Heart left ventricle (tissue), 16 donors: ENCODE measurements at regions of chr11 and their contacts with region 1.

Region 1: GRCh38 chr11:66438504-66439466 is at the start of gene MRPL11:
- DNase-seq: peak; percentile 86 to 93 (median 89)
- ATAC-seq: peak; percentile 99 to 100 (median 100)
- H3K4me3 ChIP-seq: peak within 1 kb of the TSS; percentile 63 to 98 (median 83)
- H3K27ac ChIP-seq: peak within 1 kb of the TSS; percentile 82 to 95 (median 90)
- H3K4me1 ChIP-seq: peaks cover 0 to 11% (median 8%) of the 10 kb centered on the region in 12 donors
- H3K27me3 ChIP-seq: no peaks in the 10 kb centered on the region
- CTCF ChIP-seq: peak; percentile 31 to 88 (median 68)
- POLR2A ChIP-seq: peak in 1 of 2 donors; percentile 14
- total RNA-seq, gene MRPL11: 38.9 to 56.9 (median 47.4) TPM

Region 2: GRCh38 chr11:66466225-66467027 is 27.6 kb after region 1 on chr11 and contains the start of gene PELI3:
- intact Hi-C with region 1: loop called in 1 of 10 experiments (anchors 2 kb)
- DNase-seq: peak; percentile 91 to 97 (median 94)
- ATAC-seq: peak; percentile 98 to 99 (median 98)
- H3K4me3 ChIP-seq: peak within 1 kb of the TSS; percentile 51 to 88 (median 72)
- H3K27ac ChIP-seq: peak within 1 kb of the TSS in 11 of 12 donors; percentile 52 to 87 (median 73)
- H3K4me1 ChIP-seq: peaks cover 0 to 35% (median 12%) of the 10 kb centered on the region in 12 donors
- H3K27me3 ChIP-seq: no peaks in the 10 kb centered on the region
- CTCF ChIP-seq: no peak
- POLR2A ChIP-seq: peak in 1 of 2 donors; percentile 73
- total RNA-seq, gene PELI3: 7.2 to 26.2 (median 8.0) TPM

Region 3: DNA sequence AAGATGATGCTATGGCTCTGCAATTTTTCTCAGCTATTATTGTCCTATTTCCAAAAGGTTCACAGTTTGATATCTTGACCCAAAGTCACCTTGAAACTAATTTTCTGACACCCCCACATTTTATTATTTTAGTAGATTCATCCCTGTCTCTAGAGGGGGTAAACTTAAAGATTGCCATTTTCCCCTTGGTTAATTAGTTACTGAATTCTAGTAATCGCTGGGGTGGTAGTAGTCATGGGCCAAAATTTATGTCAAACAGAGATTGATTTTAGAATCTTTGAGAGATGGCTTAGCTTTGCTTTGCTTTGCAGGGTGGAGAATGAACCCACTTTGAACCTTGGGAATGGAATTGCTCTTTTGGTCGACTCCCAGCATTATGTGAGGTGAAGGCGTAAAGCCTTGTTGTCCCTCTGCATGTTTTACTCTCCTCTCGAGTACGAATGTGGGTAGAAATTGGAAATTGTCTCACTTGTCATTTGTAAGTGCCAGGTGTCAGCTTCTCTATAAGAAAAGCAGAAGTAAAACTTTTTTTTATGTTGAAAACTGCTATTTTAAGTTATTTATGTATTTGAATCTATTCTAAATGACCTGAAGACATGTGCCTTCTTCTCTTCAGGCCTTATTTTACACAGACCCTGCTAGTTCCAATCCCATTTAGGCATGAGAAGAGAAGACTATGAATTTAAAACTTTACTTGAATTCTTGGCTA is 362.1 kb after region 1 on chr11:
- intact Hi-C with region 1: no loop called
- DNase-seq: no peak
- ATAC-seq: no peak
- H3K4me3 ChIP-seq: no peak overlapping the region
- H3K27ac ChIP-seq: no peak overlapping the region
- H3K4me1 ChIP-seq: no peaks in the 10 kb centered on the region
- H3K27me3 ChIP-seq: no peaks in the 10 kb centered on the region
- CTCF ChIP-seq: no peak
- POLR2A ChIP-seq: no peak